PC-9 (cell line): ENCODE measurements at regions of chr6 and their contacts with region 1.

Region 1: GRCh38 chr6:6927521-6928371 is 180.0 kb upstream of the RREB1 start:
- DNase-seq: peak in 1 of 2 experiments; percentile 28
- H3K4me3 ChIP-seq: no peak overlapping the region
- H3K27ac ChIP-seq: no peak overlapping the region
- H3K4me1 ChIP-seq: peaks cover 6% of the 10 kb centered on the region
- H3K27me3 ChIP-seq: no peaks in the 10 kb centered on the region
- CTCF ChIP-seq: no peak

Region 2: GRCh38 chr6:6915813-6916547 is 11.8 kb before region 1 on chr6:
- CTCF ChIA-PET with region 1: no interaction called
- POLR2A ChIA-PET with region 1: interaction called, 15 read pairs
- intact Hi-C with region 1: no loop called
- DNase-seq: no peak
- H3K4me3 ChIP-seq: no peak overlapping the region
- H3K27ac ChIP-seq: no peak overlapping the region
- H3K4me1 ChIP-seq: no peaks in the 10 kb centered on the region
- H3K27me3 ChIP-seq: no peaks in the 10 kb centered on the region
- CTCF ChIP-seq: no peak